Testis (tissue), 5 donors: ENCODE measurements at regions of chr15 and their contacts with region 1.

Region 1: DNA sequence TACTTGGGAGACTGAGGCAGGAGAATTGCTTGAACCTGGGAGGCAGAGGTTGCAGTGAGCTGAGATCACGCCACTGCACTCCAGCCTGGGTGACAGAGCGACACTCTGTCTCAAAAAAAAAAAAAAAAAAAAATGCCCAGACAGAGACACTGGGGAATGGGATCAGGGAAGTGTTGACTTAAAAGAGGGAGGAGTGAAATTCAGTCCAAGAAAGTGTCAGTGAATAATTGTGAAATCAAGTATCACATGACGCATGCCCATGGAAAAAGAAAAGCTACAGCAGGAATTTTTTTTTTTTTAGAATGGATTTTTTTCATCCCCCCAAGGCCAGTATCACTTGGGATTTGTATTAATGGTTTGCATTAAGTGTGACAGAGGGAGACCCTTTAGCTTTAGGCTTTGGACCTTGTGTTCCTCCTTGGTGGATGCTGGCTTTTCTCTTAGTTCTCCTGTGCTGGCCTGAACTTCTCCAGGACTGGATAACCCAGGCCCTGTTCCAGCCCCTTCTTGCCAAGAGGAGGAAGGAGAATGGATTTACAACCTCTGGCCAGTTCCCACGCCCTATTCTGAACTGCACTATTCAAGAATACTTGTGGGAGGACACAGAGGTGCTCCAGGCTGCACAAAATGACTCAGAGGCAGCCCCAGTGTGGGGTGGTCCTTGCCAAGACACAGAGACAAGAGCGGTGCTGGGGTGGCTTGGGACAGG is 36.7 kb upstream of the ZNF774 start:
- DNase-seq: peak; percentile 72
- H3K4me3 ChIP-seq: no peak overlapping the region
- H3K27ac ChIP-seq: no peak overlapping the region
- H3K4me1 ChIP-seq: peaks cover 9% of the 10 kb centered on the region
- H3K27me3 ChIP-seq: no peaks in the 10 kb centered on the region
- CTCF ChIP-seq: no peak
- POLR2A ChIP-seq: no peak

Region 2: GRCh38 chr15:90482124-90483011 is 166.9 kb after region 1 on chr15:
- intact Hi-C with region 1: loop called (anchors 10 kb)
- DNase-seq: peak; percentile 60
- H3K4me3 ChIP-seq: no peak overlapping the region
- H3K27ac ChIP-seq: no peak overlapping the region
- H3K4me1 ChIP-seq: no peaks in the 10 kb centered on the region
- H3K27me3 ChIP-seq: no peaks in the 10 kb centered on the region
- CTCF ChIP-seq: peak; percentile 52 to 83 (median 60)
- POLR2A ChIP-seq: no peak

Region 3: GRCh38 chr15:90497912-90498311 is 182.5 kb after region 1 on chr15:
- intact Hi-C with region 1: no loop called
- DNase-seq: no peak
- H3K4me3 ChIP-seq: no peak overlapping the region
- H3K27ac ChIP-seq: no peak overlapping the region
- H3K4me1 ChIP-seq: no peaks in the 10 kb centered on the region
- H3K27me3 ChIP-seq: no peaks in the 10 kb centered on the region
- CTCF ChIP-seq: no peak
- POLR2A ChIP-seq: no peak